Aorta (tissue), 5 donors: ENCODE measurements at regions of chr17 and their contacts with region 1.

Region 1: DNA sequence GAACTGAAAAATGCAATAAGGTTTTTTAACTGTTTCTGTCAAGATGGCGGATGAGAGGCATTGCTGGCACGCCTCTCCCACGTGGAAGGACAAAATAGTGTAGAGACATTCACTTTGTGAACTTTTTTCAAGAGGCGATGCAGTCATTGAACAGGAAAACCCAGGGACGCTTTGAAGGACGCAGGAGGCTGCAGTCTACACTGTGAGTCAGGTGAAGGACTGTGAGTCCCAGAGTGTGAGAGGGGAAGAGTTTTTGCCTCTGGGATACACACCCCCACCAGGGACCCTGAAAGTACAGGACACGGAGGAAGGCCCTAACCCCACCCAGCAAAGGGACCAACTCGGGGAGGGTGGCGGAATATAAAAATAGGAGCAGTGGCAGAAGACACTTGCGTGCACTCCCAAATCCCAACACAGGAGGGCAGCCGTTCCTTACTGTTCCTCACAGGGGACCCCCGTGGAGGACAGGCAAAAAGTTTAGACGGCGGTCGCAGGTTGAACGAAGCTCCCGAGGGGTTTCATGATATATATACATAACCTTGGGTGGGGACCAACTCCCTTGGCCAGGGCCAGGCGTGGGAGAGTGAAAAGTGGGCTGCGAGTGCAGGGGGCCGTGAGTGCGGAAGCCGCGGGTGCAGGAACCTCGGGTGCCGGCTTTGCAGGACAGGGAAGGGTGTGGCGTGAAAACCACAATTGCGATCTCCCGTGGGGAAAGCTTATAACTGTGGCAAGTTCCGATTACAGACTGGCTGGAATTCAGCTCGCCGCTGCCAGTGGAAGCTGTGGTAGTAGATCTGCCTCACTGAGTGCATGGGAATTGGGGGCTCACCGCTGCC is 82.0 kb upstream of the ALOX12 start:
- DNase-seq: peak; percentile 82 to 92
- ATAC-seq: peak; percentile 74
- H3K4me3 ChIP-seq: no peak overlapping the region
- H3K27ac ChIP-seq: no peak overlapping the region
- H3K4me1 ChIP-seq: no peaks in the 10 kb centered on the region
- H3K27me3 ChIP-seq: no peaks in the 10 kb centered on the region

Region 2: DNA sequence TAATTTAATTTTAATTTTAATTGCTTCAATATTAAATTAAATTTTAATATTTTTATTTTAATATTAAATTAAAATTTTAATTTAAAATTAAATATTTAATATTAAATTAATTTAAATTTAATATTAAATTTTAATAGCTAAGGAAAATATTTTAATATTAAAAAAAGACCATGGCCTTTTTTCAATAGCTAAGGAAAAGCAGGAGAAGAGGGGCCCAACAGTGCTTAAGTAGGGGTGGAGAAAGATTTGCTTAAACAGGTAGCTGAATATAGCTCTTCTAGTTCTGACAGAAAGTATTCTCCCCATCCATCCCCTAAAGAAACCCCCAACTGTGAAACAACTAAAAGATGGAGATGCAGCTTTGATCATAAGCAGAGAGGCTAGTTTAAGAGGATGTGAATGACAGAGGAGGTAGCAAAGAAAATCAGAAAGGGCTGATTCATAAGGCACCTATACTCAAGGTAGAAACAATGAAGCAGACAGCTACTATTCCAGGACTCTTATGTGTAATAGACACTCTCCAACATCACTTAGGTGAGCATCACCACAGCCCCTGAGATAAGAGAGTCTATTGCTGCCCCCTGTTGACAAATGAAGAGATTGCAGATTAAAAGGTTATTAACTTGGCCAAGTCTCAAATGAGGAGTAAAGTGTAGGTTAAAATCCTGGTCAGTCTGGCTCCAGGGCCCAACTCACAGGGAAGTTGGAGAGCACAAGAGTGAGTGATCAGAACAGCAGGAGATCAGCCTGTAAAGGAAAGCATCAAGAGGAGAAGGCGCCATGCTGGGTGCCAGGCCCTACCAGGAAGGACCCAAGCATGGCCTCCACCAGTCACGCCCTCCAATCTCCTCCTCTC is 90.8 kb after region 1 on chr17:
- intact Hi-C with region 1: loop called (anchors 2 to 5 kb)
- DNase-seq: peak in 1 of 2 donors; percentile 47
- ATAC-seq: peak; percentile 74
- H3K4me3 ChIP-seq: no peak overlapping the region
- H3K27ac ChIP-seq: no peak overlapping the region
- H3K4me1 ChIP-seq: no peaks in the 10 kb centered on the region
- H3K27me3 ChIP-seq: no peaks in the 10 kb centered on the region

Region 3: DNA sequence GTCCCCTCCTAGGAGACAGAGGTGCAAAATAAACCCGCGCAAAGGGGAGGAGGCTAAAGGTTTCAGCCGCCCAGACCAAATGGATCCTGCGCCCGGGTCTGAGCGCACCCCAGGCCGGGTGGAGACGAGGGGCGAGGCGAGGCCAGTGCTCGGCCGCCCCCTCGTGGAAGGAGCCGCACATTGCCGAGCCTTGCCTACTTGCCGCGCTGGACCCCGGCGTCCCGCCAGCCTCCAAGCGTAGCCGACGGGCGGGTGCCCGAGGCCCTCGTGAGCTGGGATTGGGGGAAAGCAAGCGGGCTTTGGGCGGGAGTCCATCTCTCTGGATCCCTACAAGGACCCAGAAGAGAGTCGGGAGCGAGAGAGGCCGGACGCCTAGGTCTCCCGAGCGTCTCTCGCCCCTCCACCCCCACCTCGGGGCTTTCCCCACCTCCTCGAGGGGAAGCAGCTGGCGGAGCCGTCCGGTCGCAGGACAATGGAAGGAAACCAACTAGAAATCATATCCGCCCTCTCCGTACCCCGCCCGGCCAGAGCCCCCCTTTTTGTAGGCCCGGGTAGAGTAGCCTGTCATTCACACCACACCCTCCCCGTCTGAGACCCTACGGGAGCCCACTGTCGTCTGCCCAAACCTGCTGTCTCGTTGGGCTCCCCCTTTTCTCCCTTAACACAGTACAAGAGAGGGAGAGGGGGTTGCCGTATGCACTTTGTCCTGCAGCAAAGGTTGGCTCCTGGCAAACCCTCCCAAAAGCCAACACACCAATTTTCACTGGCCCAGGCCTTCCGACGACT is 108.4 kb after region 1 on chr17:
- intact Hi-C with region 1: loop called in 1 of 2 experiments (anchors 5 kb)
- DNase-seq: peak; percentile 84 to 94
- ATAC-seq: peak; percentile 88
- H3K4me3 ChIP-seq: no peak overlapping the region
- H3K27ac ChIP-seq: no peak overlapping the region
- H3K4me1 ChIP-seq: no peaks in the 10 kb centered on the region
- H3K27me3 ChIP-seq: no peaks in the 10 kb centered on the region

Region 4: DNA sequence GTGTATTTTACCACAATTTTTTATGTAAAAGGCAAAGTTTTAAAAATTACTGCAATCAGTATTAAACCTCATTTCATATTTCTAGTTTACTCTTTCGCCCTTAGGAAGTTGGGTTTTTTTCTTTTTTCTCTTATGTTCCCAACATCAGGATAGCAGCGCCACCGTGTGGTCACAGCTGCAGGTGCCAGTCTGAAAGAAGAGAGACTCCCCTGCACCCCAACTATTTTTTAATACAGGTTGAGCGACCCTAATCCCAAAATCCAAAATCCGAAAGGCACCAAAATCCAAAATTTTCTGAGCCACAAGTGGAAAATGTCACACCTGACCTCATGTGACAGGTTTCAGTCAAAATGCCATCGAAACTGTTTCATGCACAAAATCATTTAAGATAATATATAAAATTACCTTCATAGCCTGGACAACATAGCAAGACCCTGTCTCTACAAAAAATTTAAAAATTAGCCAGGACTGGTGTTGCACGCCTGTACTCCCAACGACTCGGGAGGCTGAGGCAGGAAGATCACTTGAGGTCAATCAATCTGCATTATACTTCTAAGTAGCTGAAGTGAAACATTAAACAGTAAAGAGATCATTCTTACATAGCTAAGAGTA is 222.5 kb after region 1 on chr17:
- intact Hi-C with region 1: loop called in 1 of 2 experiments (anchors 10 kb)
- DNase-seq: peak; percentile 85 to 93
- ATAC-seq: peak; percentile 75
- H3K4me3 ChIP-seq: no peak overlapping the region
- H3K27ac ChIP-seq: no peak overlapping the region
- H3K4me1 ChIP-seq: no peaks in the 10 kb centered on the region
- H3K27me3 ChIP-seq: peaks cover 0 to 2% of the 10 kb centered on the region in 2 donors